Ovary (tissue), 10 donors: ENCODE measurements at regions of chr17 and their contacts with region 1.

Region 1: GRCh38 chr17:1509290-1509881 is 7.0 kb downstream of the INPP5K start:
- DNase-seq: no peak
- H3K4me3 ChIP-seq: no peak overlapping the region
- H3K27ac ChIP-seq: no peak overlapping the region
- H3K4me1 ChIP-seq: no peaks in the 10 kb centered on the region
- H3K27me3 ChIP-seq: no peaks in the 10 kb centered on the region
- CTCF ChIP-seq: no peak
- EP300 ChIP-seq: no peak
- POLR2A ChIP-seq: no peak

Region 2: GRCh38 chr17:1467898-1468492 is 41.4 kb before region 1 on chr17:
- intact Hi-C with region 1: loop called in 1 of 4 experiments (anchors 2 kb)
- DNase-seq: peak in 1 of 5 donors; percentile 43
- H3K4me3 ChIP-seq: no peak overlapping the region
- H3K27ac ChIP-seq: no peak overlapping the region
- H3K4me1 ChIP-seq: no peaks in the 10 kb centered on the region
- H3K27me3 ChIP-seq: no peaks in the 10 kb centered on the region
- CTCF ChIP-seq: no peak
- EP300 ChIP-seq: no peak
- POLR2A ChIP-seq: no peak

Region 3: GRCh38 chr17:1716076-1716995 is 206.9 kb after region 1 on chr17:
- intact Hi-C with region 1: no loop called
- DNase-seq: peak; percentile 100
- H3K4me3 ChIP-seq: peak overlapping the region; percentile 73
- H3K27ac ChIP-seq: peak overlapping the region; percentile 96 to 100
- H3K4me1 ChIP-seq: peaks cover 18% of the 10 kb centered on the region
- H3K27me3 ChIP-seq: no peaks in the 10 kb centered on the region
- CTCF ChIP-seq: peak in 1 of 3 donors; percentile 19
- EP300 ChIP-seq: peak; percentile 65
- POLR2A ChIP-seq: peak; percentile 100